Naive thymus-derived CD8-positive, alpha-beta T cell (primary cell): ENCODE measurements at regions of chr3 and their contacts with region 1.

Region 1: DNA sequence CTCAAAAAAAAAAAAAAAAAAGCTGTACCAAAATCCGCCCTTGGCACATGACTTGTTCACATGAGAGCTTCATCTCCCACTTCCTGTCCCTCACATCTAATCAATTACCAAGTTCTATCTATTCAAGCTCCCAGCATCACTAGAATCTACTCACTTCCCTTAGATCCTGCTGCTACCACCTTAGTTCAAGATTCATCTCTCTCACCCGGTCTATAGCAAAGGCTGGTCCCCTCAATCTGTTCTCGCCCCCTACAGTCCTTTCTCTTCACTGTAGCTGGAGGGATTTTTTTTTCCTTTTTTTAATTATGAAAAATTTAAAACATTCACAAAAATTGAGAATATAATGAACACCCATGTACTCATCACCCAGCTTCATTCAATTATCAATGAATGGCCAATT is 16.7 kb upstream of the GPR160 start:
- DNase-seq: peak in 2 of 10 donors; percentile 26 to 32
- ATAC-seq: peak; percentile 66 to 79
- H3K4me3 Mint-ChIP-seq: peak overlapping the region in 4 of 10 donors; percentile 9 to 58 (median 33)
- H3K27ac Mint-ChIP-seq: peak overlapping the region in 3 of 10 donors; percentile 31 to 43 (median 35)
- H3K4me1 Mint-ChIP-seq: peaks cover 2 to 25% (median 16%) of the 10 kb centered on the region in 4 donors
- H3K27me3 Mint-ChIP-seq: no peaks in the 10 kb centered on the region

Region 2: GRCh38 chr3:169886671-169887070 is 134.4 kb before region 1 on chr3:
- POLR2A ChIA-PET with region 1: no interaction called
- DNase-seq: no peak
- ATAC-seq: no peak
- H3K4me3 Mint-ChIP-seq: no peak overlapping the region
- H3K27ac Mint-ChIP-seq: peak overlapping the region in 1 of 10 donors; percentile 82
- H3K4me1 Mint-ChIP-seq: no peaks in the 10 kb centered on the region
- H3K27me3 Mint-ChIP-seq: peaks cover 0 to 1% (median 0%) of the 10 kb centered on the region in 5 donors

Region 3: DNA sequence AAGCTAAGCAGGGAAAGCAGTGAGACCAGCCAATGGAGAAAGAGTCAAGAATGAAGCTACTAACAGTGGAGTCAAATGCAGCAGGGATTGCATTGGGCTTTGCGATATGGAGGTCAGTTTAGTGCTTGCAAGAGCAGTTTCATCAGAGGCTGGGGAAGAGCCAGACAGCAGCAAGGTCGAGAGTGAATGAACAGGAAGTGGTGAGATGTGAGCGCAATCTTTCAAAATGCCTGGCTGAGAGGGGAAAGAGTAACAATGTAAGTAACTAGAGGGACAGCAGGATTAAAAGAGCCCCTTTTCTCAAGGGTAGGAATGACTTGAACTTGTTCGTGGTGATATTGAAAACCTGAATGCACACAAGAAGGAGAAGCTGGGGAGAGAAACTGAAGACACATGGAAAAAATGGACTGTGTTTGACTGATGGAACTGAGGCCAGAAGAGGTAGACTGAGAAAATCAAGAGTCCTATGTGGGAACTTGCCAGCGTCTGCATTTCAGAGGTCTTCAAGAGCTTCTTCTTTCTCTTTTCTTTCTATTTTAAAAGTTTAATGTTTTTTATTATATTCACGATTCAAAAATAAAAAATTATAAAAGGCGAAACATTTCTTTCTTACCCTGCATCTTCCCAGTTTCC is 13.9 kb before region 1 on chr3:
- POLR2A ChIA-PET with region 1: interaction called, 10 read pairs
- DNase-seq: peak in 8 of 10 donors; percentile 8 to 65 (median 42)
- ATAC-seq: peak; percentile 94 to 97
- H3K4me3 Mint-ChIP-seq: peak overlapping the region in 9 of 10 donors; percentile 8 to 70 (median 47)
- H3K27ac Mint-ChIP-seq: peak overlapping the region; percentile 17 to 77 (median 72)
- H3K4me1 Mint-ChIP-seq: peaks cover 27 to 51% (median 45%) of the 10 kb centered on the region in 4 donors
- H3K27me3 Mint-ChIP-seq: no peaks in the 10 kb centered on the region